ENCODE measurements at regions of chr5 and their contacts with region 1.

Region 1: DNA sequence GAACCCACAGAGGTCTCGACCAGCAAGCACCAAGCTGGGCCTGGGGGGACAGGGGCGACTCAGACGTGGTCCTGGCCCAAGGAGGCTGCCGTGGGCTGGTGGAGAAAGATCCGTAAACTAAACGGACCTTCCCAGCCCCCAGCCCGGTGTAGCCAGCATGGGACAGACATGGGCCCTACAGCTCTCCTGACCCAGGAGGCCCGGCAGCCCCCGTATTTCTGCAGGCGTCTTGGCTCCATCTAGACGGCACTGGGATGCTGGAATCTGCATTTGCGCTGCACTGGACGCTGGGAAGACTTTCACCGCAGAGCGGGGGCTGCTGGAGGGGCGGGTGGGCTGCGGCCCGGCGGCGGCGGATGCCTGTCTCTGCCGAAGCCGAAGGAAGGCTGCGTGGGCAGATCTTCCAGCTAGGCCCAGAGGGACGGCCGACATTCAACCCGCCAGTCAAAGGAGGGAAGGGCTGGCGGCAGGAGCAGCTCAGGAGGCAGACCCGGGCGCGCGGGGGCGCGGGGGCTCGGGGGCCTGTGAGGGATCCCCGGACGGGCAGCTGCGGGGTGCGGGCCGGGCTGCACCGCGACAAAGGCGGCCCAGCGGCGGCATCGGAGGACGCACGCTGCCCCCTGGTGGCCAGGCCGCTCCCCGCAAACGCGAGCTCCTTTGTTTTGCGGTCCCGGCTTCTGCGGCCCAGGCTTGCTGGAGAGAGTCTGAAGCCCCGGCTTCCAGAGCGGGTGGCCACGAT is 266.2 kb downstream of the NSG2 start:
- DNase-seq: peak; percentile 83
- ATAC-seq: peak; percentile 92

Region 2: DNA sequence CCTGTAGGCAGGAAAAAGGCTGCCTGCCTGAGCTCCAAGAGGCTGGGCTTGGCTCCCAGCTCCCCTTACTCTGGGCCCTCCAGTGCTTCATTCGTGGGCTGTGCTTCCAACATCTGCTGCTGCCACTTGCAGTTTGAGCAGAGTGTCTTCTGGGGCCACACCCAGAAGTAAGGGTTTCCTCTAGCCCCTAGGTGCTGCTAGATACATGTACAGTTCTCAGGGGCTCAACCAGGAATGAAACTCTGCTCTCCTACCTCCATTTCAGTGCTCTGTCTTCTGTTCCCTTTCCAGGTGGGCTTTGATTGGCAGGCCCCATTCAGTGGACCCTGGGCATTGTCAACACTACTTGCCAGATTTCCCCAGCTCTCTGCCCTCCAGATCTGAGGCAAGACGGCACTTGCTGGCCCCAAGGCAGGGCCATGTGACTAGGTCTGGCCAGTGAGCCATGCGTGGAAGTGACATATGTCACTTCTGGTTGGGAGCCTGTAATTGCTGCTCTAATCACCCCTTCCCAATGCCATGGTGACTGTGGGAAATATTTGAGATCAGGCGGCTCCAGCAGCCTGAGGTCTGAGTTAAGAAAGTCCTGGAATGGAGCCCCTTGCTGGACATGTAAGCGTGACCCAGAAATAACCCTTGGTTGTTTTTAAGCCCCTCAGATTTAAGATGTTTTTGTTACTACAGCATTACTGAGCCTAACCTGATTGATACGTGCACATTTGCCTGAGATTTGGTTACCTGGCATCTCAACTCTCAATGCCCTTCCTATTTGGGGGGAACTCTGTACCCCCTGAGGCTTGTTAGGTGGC is 685.8 kb before region 1 on chr5:
- intact Hi-C with region 1: loop called (anchors 10 kb)
- DNase-seq: no peak
- ATAC-seq: peak; percentile 83

Region 3: GRCh38 chr5:174045470-174046025 is 266.2 kb before region 1 on chr5 and contains the start of gene NSG2:
- intact Hi-C with region 1: loop called (anchors 2 kb)
- DNase-seq: peak; percentile 89
- ATAC-seq: peak; percentile 99
- total RNA-seq, gene NSG2: 0.11 TPM

Region 4: GRCh38 chr5:174424219-174425053 is 112.7 kb after region 1 on chr5:
- intact Hi-C with region 1: no loop called
- DNase-seq: no peak
- ATAC-seq: no peak